ENCODE measurements at regions of chr2 and their contacts with region 1.

Region 1: GRCh38 chr2:25700221-25700660 is 26.9 kb upstream of the DTNB start:
- DNase-seq: peak; percentile 43

Region 2: DNA sequence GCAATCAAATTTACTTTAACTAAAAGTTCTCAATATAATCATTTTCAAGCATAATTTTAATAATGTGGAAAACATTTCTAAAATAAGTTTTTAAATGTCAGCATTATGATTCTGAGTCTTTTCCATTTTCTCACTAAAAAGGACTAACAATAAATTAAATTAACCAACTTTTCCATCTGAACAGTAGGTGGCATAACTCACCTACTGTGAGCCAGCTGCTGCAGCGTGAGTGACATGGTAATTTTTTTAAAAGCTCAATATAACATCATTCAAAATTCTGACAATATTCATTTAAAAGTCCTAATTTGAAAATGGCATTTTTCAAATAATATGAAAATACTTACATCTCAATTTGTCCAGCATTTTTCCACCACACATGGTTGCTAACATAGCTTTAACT is 93.3 kb before region 1 on chr2:
- CTCF ChIA-PET with region 1: interaction called, 34 read pairs
- POLR2A ChIA-PET with region 1: no interaction called
- DNase-seq: peak; percentile 22

Region 3: DNA sequence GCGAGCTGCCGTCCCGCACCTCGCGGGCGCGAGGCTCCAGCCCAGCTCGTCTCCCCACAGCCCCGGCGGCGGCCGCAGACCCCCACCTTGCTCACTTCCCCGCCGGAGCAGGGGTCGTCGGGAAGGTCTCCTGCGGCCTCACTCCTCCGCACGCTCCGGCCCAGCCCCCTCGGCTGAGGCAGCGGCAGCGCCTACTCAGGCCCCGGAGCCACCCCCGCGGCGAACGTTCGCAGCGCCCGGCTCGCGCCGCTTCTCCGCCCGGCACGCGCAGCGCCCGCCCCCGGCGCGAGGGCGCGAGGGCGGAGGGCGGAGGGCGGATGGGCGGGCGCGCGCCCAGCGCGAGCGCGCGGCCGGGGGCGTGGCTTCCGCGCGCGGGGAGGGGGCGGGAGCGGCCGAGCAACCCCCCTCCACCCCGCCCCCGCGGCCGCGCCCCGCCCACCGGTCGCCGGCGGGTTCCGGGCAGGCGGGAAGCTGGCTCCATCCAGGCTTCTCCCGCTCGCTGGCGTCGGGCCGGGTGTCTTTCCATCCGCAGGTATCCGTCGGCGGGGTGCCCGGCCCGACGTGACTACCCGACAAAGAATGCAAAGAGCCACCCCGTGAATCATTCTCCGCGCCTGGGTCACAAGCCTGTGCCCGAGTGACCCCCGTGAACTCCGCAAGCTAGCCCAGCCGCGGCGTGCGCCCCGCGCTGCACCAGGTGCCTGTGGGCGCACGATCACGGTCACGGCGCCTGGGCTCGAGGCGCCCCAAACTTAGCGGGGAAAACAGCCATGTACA is 26.8 kb before region 1 on chr2 and contains the start of gene DTNB:
- CTCF ChIA-PET with region 1: interaction called, 10 read pairs
- POLR2A ChIA-PET with region 1: interaction called, 14 read pairs
- DNase-seq: peak; percentile 93

Region 4: GRCh38 chr2:25684577-25685473 is 15.4 kb before region 1 on chr2:
- CTCF ChIA-PET with region 1: interaction called, 18 read pairs
- POLR2A ChIA-PET with region 1: no interaction called
- DNase-seq: no peak

Region 5: GRCh38 chr2:25833566-25833965 is 133.3 kb after region 1 on chr2:
- CTCF ChIA-PET with region 1: no interaction called
- POLR2A ChIA-PET with region 1: no interaction called
- DNase-seq: no peak

Measured in HEK293T (cell line).